Panc1 (cell line): ENCODE measurements at regions of chrX and their contacts with region 1.

Region 1: GRCh38 chrX:46381630-46382029 is 163.6 kb downstream of the ZNF674 start:
- DNase-seq: no peak
- ATAC-seq: peak; percentile 68; the same call in 1 of the 2 replicates
- H3K4me3 ChIP-seq: no peak overlapping the region
- H3K27ac ChIP-seq: no peak overlapping the region
- H3K4me1 ChIP-seq: no peaks in the 10 kb centered on the region
- H3K27me3 ChIP-seq: no peaks in the 10 kb centered on the region
- CTCF ChIP-seq: peak; percentile 75

Region 2: DNA sequence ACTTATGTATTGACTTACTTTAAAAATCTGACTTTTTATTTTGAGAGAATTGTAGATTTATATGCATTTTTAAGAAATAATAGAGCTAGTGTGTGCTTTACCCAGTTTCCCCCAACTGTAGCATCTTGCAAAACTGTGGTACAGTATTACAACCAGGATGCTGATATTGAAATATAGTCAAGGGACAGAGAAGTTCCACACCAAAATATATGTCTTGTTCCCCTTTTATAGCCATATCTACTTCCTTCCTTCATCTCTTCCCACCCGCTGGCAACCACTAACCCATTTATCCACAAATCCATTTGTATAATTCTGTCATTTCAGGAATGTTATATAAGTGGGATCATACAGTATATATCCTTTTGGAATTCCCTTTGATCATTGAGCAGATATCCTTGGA is 1491.8 kb before region 1 on chrX:
- CTCF ChIA-PET with region 1: no interaction called
- POLR2A ChIA-PET with region 1: no interaction called
- in situ Hi-C with region 1: no loop called
- intact Hi-C with region 1: no loop called
- DNase-seq: no peak
- ATAC-seq: no peak
- H3K4me3 ChIP-seq: no peak overlapping the region
- H3K27ac ChIP-seq: no peak overlapping the region
- H3K4me1 ChIP-seq: no peaks in the 10 kb centered on the region
- H3K27me3 ChIP-seq: no peaks in the 10 kb centered on the region
- CTCF ChIP-seq: no peak

Region 3: GRCh38 chrX:45843518-45843917 is 538.1 kb before region 1 on chrX:
- CTCF ChIA-PET with region 1: interaction called, 14 read pairs
- POLR2A ChIA-PET with region 1: no interaction called
- in situ Hi-C with region 1: no loop called
- intact Hi-C with region 1: no loop called
- DNase-seq: no peak
- ATAC-seq: no peak
- H3K4me3 ChIP-seq: no peak overlapping the region
- H3K27ac ChIP-seq: no peak overlapping the region
- H3K4me1 ChIP-seq: no peaks in the 10 kb centered on the region; the same call in 1 of the 2 replicates
- H3K27me3 ChIP-seq: no peaks in the 10 kb centered on the region
- CTCF ChIP-seq: peak; percentile 29; the same call in 1 of the 2 replicates